Endothelial cell of umbilical vein (primary cell): ENCODE measurements at regions of chr6 and their contacts with region 1.

Region 1: GRCh38 chr6:17714879-17715851 is 8.4 kb upstream of the NUP153 start:
- DNase-seq: peak; percentile 82
- H3K4me3 ChIP-seq: peak overlapping the region in 1 of 3 experiments; percentile 15
- H3K27ac ChIP-seq: peak overlapping the region; percentile 84
- H3K4me1 ChIP-seq: peaks cover 23% of the 10 kb centered on the region
- H3K27me3 ChIP-seq: no peaks in the 10 kb centered on the region
- CTCF ChIP-seq: peak in 1 of 2 donors; percentile 1
- POLR2A ChIP-seq: no peak

Region 2: DNA sequence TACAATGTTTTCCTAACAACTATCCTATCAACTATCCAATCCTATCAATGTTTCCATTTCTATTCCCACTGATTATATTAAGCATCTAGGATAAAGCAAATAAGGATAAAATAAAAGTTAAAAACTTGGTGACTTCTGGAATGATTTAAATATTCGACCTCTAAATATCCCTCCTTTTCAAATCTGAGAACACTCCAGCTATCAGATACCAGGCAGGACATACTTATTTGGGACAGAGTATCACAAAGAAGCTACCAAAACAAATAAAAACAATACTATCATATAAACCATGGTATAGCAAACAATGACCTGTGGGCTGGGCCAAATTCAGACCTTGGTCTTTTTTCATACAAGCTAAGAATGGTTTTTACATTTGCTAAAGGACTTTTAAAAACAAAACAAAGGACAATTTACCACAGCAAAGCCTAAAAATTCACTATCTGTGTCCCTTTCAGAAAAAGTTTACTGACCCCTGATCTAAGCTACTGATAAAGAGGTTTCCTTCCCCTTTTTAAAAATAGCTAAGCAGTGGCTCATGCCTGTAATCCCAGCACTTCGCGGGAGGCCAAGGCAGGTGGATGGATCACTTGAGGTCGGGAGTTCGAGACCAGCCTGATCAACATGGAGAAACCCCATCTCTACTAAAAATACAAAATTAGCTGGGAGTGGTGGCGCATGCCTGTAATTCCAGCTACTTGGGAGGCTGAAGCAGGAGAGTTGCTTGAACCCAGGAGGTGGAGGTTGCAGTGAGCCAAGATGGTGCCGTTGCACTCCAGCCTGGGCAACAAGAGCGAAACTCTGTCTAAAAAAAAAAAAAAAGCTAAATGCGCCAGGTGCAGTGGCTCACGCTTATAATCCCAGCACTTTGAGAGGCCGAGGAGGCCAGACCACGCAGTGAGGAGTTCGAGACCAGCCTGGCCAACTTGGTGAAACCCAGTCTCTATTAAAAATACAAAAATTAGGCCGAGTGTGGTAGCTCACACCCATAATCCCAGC is 14.4 kb before region 1 on chr6:
- CTCF ChIA-PET with region 1: interaction called, 11 read pairs
- POLR2A ChIA-PET with region 1: no interaction called
- dilution Hi-C with region 1: no loop called
- intact Hi-C with region 1: no loop called
- DNase-seq: no peak
- H3K4me3 ChIP-seq: no peak overlapping the region
- H3K27ac ChIP-seq: peak overlapping the region; percentile 11
- H3K4me1 ChIP-seq: peaks cover 36% of the 10 kb centered on the region
- H3K27me3 ChIP-seq: no peaks in the 10 kb centered on the region
- CTCF ChIP-seq: no peak
- POLR2A ChIP-seq: no peak

Region 3: GRCh38 chr6:17790489-17790888 is 75.3 kb after region 1 on chr6:
- CTCF ChIA-PET with region 1: no interaction called
- POLR2A ChIA-PET with region 1: no interaction called
- dilution Hi-C with region 1: no loop called
- intact Hi-C with region 1: no loop called
- DNase-seq: no peak
- H3K4me3 ChIP-seq: no peak overlapping the region
- H3K27ac ChIP-seq: no peak overlapping the region
- H3K4me1 ChIP-seq: no peaks in the 10 kb centered on the region
- H3K27me3 ChIP-seq: no peaks in the 10 kb centered on the region
- CTCF ChIP-seq: no peak
- POLR2A ChIP-seq: no peak